ENCODE measurements at regions of chr16 and their contacts with region 1.

Region 1: DNA sequence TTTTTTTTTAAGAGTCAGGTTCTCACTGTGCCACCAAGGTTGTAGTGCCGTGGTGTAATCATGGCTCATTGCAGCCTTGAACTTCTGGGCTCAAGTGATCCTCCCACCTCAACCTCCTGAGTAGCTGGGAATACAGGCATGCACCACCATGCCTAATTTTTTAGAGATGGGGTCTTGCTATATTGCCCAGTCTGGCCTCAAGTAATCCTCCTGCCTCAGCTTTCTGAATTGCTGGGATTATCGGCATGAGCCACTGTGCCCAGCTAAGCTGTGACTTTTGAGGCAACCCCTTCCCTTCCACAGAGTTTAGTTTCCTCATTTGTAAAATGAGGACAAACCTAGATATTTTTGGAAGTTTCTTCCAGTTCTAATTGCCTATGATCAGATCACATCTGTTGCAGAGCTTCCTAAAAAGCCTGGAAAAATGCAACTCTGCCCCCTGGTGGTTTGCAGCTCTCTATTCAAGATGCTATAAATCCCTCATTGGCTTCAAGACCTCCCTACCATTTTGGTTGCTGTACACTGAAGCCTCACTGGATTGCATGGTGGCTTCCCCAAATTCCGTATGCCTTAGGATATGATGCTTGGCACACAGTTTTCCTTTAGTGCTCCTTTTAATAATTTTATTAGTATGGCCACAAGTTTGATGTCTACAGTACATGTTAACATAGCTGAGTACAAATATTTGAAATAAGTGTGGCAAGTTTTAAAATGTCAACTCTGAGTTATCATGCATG is 19.3 kb downstream of the GDE1 start:
- DNase-seq: peak; percentile 79
- ATAC-seq: peak; percentile 61
- H3K4me3 Mint-ChIP-seq: no peak overlapping the region
- H3K27ac Mint-ChIP-seq: no peak overlapping the region
- H3K4me1 Mint-ChIP-seq: no peaks in the 10 kb centered on the region
- H3K27me3 Mint-ChIP-seq: no peaks in the 10 kb centered on the region
- CTCF ChIP-seq: peak; percentile 63

Region 2: GRCh38 chr16:19400697-19401096 is 101.9 kb before region 1 on chr16:
- CTCF ChIA-PET with region 1: interaction called, 23 read pairs
- POLR2A ChIA-PET with region 1: no interaction called
- DNase-seq: peak; percentile 47
- ATAC-seq: peak; percentile 76
- H3K4me3 Mint-ChIP-seq: no peak overlapping the region
- H3K27ac Mint-ChIP-seq: no peak overlapping the region
- H3K4me1 Mint-ChIP-seq: peaks cover 26% of the 10 kb centered on the region
- H3K27me3 Mint-ChIP-seq: peaks cover 43% of the 10 kb centered on the region
- CTCF ChIP-seq: 0 out of 2 replicates have a peak, but pooled peaks have one; percentile 24

Region 3: GRCh38 chr16:19417640-19418599 is 84.6 kb before region 1 on chr16 and contains the start of gene TMC5:
- CTCF ChIA-PET with region 1: interaction called, 11 read pairs
- POLR2A ChIA-PET with region 1: no interaction called
- DNase-seq: no peak
- ATAC-seq: no peak
- H3K4me3 Mint-ChIP-seq: no peak within 1 kb of the TSS
- H3K27ac Mint-ChIP-seq: no peak within 1 kb of the TSS
- H3K4me1 Mint-ChIP-seq: peaks cover 8% of the 10 kb centered on the region
- H3K27me3 Mint-ChIP-seq: peaks cover 3% of the 10 kb centered on the region; the same call in 1 of the 2 replicates
- CTCF ChIP-seq: no peak
- total RNA-seq, gene TMC5: 2.1 to 4.6 TPM (median 3.1 TPM) in 3 replicates

Region 4: DNA sequence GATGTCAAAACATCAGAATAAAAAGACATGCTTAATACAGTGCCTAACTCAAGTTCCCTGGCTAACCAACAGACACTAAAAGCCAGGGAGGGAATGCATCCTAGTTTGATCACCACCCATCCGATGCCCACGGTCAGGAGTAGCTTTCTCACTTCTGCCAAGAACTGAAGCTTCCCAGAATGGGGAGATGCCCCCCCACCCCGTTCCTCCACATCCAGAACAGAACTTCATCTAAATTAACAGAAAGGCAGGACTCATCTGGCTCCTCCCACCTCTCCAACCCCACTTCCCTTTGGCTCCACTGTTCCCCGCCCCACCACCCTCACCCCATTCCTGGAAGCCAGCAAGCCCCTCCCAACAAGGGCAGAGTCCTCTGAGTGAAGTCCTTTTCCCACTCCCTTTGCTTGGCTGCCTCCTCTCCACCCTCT is 14.3 kb before region 1 on chr16:
- CTCF ChIA-PET with region 1: interaction called, 10 read pairs
- POLR2A ChIA-PET with region 1: no interaction called
- DNase-seq: peak; percentile 50
- ATAC-seq: peak; percentile 86
- H3K4me3 Mint-ChIP-seq: peak overlapping the region; percentile 20
- H3K27ac Mint-ChIP-seq: peak overlapping the region; percentile 65
- H3K4me1 Mint-ChIP-seq: peaks cover 29% of the 10 kb centered on the region
- H3K27me3 Mint-ChIP-seq: peaks cover 6% of the 10 kb centered on the region; the same call in 1 of the 2 replicates
- CTCF ChIP-seq: no peak

Region 5: DNA sequence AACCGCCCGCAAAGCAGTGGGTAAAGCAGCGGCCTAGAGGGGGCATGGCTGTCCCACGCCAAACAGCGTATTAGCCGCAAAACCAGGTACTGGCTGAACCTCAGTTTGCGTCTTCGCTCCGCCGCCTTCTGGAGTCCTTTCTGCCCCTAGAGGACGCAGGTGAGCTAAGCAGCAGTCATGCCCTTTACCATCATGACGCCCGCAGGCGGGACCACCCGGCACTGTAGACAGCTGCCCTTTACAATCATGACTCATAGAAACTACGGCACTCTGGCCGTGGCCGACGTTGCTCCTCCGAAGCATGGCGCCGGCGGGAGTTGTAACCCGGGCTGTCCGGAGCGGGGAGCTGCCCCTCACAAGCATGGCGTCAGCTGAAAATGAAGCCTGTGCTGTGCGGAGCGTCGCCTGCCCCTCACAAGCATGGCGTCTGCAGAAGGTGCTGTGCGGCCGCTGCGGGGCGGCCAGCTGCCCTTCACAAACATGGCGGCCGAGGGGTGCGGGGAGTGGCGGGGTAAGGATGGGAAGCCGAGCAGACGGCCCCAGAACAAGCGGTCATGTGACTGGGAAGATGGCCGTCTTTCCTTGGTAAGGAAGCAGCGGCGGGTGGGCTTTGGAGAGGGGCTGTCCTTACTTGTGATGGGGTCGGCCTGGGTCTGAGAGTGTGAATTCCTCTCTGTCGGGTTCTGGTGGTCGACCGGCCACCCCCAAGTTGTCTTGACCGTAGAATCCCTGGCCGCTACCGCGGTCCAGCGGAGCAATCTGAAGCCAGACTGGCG is 52.8 kb after region 1 on chr16 and contains the start of gene VPS35L:
- CTCF ChIA-PET with region 1: interaction called, 19 read pairs
- POLR2A ChIA-PET with region 1: no interaction called
- DNase-seq: peak; percentile 98
- ATAC-seq: peak; percentile 89
- H3K4me3 Mint-ChIP-seq: peak within 1 kb of the TSS; percentile 94
- H3K27ac Mint-ChIP-seq: peak within 1 kb of the TSS; percentile 98
- H3K4me1 Mint-ChIP-seq: peaks cover 20% of the 10 kb centered on the region
- H3K27me3 Mint-ChIP-seq: no peaks in the 10 kb centered on the region
- CTCF ChIP-seq: peak; percentile 27; the same call in 1 of the 2 replicates
- total RNA-seq, gene VPS35L: 59.7 to 71.7 TPM (median 65.5 TPM) in 3 replicates

Measured in WTC11 (cell line).